HEK293 (cell line): ENCODE measurements at regions of chr16 and their contacts with region 1.

Region 1: DNA sequence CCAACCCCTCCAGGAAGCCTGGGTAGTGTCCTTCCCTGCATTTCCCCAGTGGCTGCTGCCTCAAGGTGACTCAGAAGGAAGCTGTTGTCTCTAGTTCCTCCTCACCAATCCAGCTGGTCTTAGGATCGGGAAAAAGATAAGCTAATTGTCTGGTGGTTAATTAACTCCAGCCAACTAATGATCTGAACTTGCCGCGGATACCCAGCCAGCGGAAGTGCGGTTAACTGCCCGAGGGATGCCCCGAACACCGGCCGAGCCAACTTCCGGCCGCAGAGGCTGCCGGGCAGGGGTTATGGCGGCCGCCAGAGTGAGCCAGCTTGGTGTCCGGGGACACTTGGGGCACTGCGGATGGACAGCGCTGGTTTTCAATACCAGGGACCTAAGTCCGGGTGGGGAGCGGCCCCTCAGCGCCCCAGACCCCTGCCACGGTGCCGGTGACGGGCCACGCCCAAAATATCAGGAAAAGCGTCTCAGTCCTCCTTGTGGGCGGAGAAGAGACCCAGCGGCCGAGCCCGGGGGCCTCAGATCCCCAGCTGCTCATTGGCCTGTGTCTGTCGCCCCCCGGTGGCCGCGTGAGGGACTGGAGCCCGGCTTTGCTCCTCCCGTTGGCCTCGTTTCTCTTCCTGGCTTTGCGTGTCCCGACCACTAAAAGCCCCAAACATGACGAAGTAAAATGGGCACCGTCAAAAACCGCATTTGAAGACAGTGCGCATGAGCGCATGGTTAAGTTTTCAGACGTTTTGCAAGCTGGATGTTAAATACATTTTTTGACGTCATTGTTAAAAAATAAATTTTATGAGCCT is 10.2 kb upstream of the PRSS22 start:
- H3K4me3 ChIP-seq: peak overlapping the region; percentile 68
- H3K27ac ChIP-seq: peak overlapping the region; percentile 67
- H3K4me1 ChIP-seq: no peaks in the 10 kb centered on the region
- CTCF ChIP-seq: peak; percentile 97

Region 2: DNA sequence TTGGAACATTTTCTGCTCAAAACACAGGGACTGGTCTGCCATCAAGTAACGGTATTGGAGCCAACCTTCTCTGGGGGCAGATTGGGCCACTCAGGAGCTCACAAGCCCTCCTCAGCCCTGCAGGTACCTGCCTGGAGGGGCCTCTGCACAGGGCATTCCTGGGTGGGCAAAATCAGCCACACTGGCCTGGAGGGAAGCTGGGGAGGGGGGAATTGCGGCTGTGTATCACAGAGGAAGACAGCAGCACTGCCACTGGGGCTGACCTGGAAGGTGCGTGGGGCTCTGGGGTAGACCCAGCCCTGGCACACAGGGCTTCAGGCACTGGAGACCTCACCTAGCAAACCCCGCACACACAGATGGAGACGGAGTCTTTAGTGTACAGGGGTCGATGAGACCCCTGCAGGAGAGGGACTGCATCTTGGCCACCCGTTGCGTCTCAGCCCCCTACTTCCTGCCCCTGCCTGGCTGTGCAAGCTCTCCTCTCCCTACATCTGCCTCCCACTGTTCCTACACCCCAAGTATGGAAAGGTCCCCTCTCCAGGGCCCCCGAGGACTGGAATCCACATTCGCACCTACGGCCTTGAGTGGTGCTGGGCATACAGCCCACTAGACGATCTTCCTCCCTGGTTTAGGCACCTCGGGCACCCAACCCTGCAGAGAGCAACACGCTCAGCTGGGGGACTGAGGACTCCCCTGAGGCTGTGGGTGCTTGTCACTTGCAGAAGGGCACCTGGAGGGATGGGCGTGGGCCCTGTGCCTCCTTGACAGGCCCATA is 122.9 kb before region 1 on chr16:
- CTCF ChIA-PET with region 1: interaction called, 10 read pairs
- POLR2A ChIA-PET with region 1: interaction called, 3 read pairs
- H3K4me3 ChIP-seq: no peak overlapping the region
- H3K27ac ChIP-seq: no peak overlapping the region
- H3K4me1 ChIP-seq: no peaks in the 10 kb centered on the region
- CTCF ChIP-seq: no peak

Region 3: DNA sequence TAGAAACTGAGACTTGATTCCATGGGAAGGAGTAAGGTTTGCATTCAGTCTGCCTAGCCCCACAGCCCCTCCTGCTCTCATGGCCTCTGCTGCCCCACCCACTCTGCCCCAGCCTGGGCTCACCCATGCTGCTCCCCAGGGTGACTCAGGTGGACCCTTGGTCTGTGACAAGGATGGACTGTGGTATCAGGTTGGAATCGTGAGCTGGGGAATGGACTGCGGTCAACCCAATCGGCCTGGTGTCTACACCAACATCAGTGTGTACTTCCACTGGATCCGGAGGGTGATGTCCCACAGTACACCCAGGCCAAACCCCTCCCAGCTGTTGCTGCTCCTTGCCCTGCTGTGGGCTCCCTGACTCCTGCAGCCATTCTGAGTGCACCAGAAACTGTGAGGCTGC is 63.4 kb before region 1 on chr16:
- CTCF ChIA-PET with region 1: no interaction called
- POLR2A ChIA-PET with region 1: no interaction called
- H3K4me3 ChIP-seq: no peak overlapping the region
- H3K27ac ChIP-seq: no peak overlapping the region
- H3K4me1 ChIP-seq: no peaks in the 10 kb centered on the region; the same call in 1 of the 2 replicates
- CTCF ChIP-seq: no peak

Region 4: GRCh38 chr16:2838928-2839327 is 29.3 kb before region 1 on chr16:
- CTCF ChIA-PET with region 1: interaction called, 25 read pairs
- POLR2A ChIA-PET with region 1: interaction called, 14 read pairs
- H3K4me3 ChIP-seq: no peak overlapping the region
- H3K27ac ChIP-seq: no peak overlapping the region
- H3K4me1 ChIP-seq: no peaks in the 10 kb centered on the region
- CTCF ChIP-seq: peak; percentile 95

Region 5: GRCh38 chr16:2883027-2883851 is 15.1 kb after region 1 on chr16 and contains the start of gene FLYWCH2:
- CTCF ChIA-PET with region 1: interaction called, 13 read pairs
- POLR2A ChIA-PET with region 1: interaction called, 18 read pairs
- H3K4me3 ChIP-seq: peak within 1 kb of the TSS; percentile 95
- H3K27ac ChIP-seq: peak within 1 kb of the TSS; percentile 77; the same call in 1 of the 2 replicates
- H3K4me1 ChIP-seq: no peaks in the 10 kb centered on the region
- CTCF ChIP-seq: peak; percentile 94

Region 6: GRCh38 chr16:2919511-2920255 is 51.5 kb after region 1 on chr16:
- CTCF ChIA-PET with region 1: interaction called, 31 read pairs
- POLR2A ChIA-PET with region 1: no interaction called
- H3K4me3 ChIP-seq: no peak overlapping the region
- H3K27ac ChIP-seq: no peak overlapping the region
- H3K4me1 ChIP-seq: 0 out of 2 replicates have a peak, but pooled peaks cover 4% of the 10 kb centered on the region
- CTCF ChIP-seq: peak; percentile 60; the same call in 1 of the 2 replicates

Region 7: GRCh38 chr16:3282730-3283524 is 414.7 kb after region 1 on chr16 and contains the start of gene ZNF263:
- CTCF ChIA-PET with region 1: no interaction called
- POLR2A ChIA-PET with region 1: no interaction called
- H3K4me3 ChIP-seq: peak within 1 kb of the TSS; percentile 74
- H3K27ac ChIP-seq: peak within 1 kb of the TSS; percentile 94
- H3K4me1 ChIP-seq: no peaks in the 10 kb centered on the region
- CTCF ChIP-seq: no peak